ENCODE measurements at regions of chr15 and their contacts with region 1.

Region 1: GRCh38 chr15:60179786-60180391 is 175.8 kb downstream of the FOXB1 start:
- DNase-seq: no peak
- ATAC-seq: peak in 1 of 4 donors; percentile 53
- H3K4me3 ChIP-seq: no peak overlapping the region
- H3K27ac ChIP-seq: no peak overlapping the region
- H3K4me1 ChIP-seq: no peaks in the 10 kb centered on the region
- H3K27me3 ChIP-seq: peaks cover 0 to 10% (median 0%) of the 10 kb centered on the region in 3 donors
- CTCF ChIP-seq: peak; percentile 74

Region 2: GRCh38 chr15:59725172-59725486 is 454.8 kb before region 1 on chr15:
- intact Hi-C with region 1: loop called in 1 of 2 experiments (anchors 10 kb)
- DNase-seq: no peak
- ATAC-seq: no peak
- H3K4me3 ChIP-seq: no peak overlapping the region
- H3K27ac ChIP-seq: peak overlapping the region; percentile 72
- H3K4me1 ChIP-seq: peaks cover 14% of the 10 kb centered on the region
- H3K27me3 ChIP-seq: no peaks in the 10 kb centered on the region
- CTCF ChIP-seq: no peak

Region 3: GRCh38 chr15:59917504-59918157 is 262.3 kb before region 1 on chr15:
- intact Hi-C with region 1: loop called in 1 of 2 experiments (anchors 2 kb)
- DNase-seq: peak in 1 of 2 donors; percentile 14
- ATAC-seq: peak in 3 of 4 donors; percentile 59 to 65 (median 60)
- H3K4me3 ChIP-seq: no peak overlapping the region
- H3K27ac ChIP-seq: no peak overlapping the region
- H3K4me1 ChIP-seq: no peaks in the 10 kb centered on the region
- H3K27me3 ChIP-seq: peaks cover 0 to 2% (median 2%) of the 10 kb centered on the region in 3 donors
- CTCF ChIP-seq: peak; percentile 31

Measured in psoas muscle (tissue), 8 donors.